ENCODE measurements at regions of chr1 and their contacts with region 1.

Region 1: GRCh38 chr1:168082008-168082876 is 54.5 kb downstream of the GPR161 start:
- DNase-seq: peak; percentile 38
- H3K4me3 ChIP-seq: no peak overlapping the region
- CTCF ChIP-seq: peak; percentile 96

Region 2: DNA sequence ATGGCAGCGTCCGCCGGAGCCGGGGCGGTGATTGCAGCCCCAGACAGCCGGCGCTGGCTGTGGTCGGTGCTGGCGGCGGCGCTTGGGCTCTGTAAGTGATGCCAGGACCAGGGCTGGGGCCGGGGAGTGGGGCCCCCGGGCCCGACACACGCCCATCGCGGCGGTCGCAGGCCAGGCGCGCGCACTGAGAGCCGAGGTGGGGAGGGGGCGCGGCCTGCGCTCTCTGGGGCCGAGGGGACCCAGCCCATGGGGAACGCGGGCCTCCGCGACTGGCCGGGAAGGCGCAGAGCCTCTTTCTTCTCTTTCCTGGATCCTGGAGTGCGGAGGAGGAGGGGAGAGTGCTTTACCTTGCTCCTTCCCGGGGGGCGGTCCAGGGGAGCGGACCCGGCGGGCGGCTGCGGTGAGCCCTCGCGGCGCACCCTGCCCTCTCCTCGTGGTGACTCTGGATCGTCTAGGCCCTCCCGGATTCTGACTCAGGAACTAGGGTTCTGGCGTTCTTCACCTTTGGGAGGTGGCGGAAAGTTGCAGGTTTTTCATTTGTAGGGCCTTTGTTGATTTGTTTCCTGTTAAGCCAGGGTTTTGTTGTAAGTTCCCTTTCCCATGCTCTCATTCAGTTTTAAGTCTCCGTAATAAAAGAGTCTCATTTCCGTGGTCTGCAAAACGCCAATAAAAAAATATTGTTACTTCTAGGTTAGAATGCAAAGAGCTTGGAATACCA is 359.9 kb before region 1 on chr1:
- CTCF ChIA-PET with region 1: interaction called, 26 read pairs
- POLR2A ChIA-PET with region 1: no interaction called
- DNase-seq: no peak
- H3K4me3 ChIP-seq: peak overlapping the region; percentile 77
- CTCF ChIP-seq: no peak

Region 3: GRCh38 chr1:167922023-167922422 is 160.2 kb before region 1 on chr1:
- CTCF ChIA-PET with region 1: no interaction called
- POLR2A ChIA-PET with region 1: no interaction called
- DNase-seq: no peak
- H3K4me3 ChIP-seq: no peak overlapping the region
- CTCF ChIP-seq: no peak

Region 4: DNA sequence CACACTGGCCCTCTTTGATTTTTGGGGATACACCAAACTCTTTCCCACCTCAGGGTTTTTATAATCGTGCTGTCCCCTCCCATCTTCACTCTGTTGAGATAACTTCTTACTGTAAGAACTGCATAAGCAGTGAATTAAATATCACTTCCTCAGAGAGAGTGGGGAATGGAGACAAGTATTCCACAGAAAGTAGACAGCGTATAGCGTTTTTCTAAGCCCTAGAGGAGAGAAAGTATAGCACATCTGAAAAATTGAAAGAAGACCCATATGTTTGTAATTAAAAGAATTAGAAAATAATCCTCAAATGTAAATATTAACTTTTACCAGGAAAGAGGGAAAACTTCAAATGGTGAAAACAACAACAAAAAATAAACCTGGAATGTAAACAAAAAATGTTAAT is 12.9 kb before region 1 on chr1:
- CTCF ChIA-PET with region 1: interaction called, 28 read pairs
- POLR2A ChIA-PET with region 1: no interaction called
- DNase-seq: no peak
- H3K4me3 ChIP-seq: no peak overlapping the region
- CTCF ChIP-seq: no peak

Region 5: DNA sequence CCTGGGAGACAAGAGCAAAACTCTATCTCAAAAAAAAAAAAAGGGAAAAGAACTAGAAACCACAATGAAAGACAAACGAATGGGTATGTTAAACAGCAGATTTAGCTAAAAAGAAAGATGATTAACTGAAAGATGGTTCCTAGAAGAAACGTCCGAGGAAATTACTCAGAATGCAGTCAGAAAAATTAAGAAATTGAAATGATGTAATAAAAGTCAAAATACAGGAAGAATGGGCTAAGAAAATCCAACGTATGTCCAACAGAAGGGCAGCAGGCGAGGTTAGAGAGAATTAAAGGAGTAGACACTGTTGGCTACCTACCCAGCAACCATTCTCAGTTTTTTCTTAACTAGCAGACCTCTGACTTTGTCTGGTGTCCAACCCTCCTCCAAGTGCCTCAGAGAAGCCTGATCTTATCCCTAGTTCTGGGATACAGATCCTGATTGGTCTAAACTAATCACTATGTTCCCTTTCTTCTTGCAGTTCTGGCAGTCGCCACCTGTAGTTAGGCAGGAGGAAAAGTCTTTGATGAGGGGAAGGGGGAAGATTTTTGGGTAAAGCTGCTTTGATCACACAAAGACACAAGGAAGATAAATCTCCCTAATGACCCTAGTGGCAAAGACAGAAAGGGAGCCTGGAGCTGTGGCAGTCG is 28.8 kb after region 1 on chr1:
- CTCF ChIA-PET with region 1: interaction called, 237 read pairs
- POLR2A ChIA-PET with region 1: no interaction called
- DNase-seq: no peak
- H3K4me3 ChIP-seq: no peak overlapping the region
- CTCF ChIP-seq: no peak

Region 6: GRCh38 chr1:168136709-168137514 is 54.7 kb after region 1 on chr1 and contains the start of gene GPR161:
- CTCF ChIA-PET with region 1: interaction called, 10 read pairs
- POLR2A ChIA-PET with region 1: interaction called, 5 read pairs
- DNase-seq: no peak
- H3K4me3 ChIP-seq: peak within 1 kb of the TSS; percentile 79
- CTCF ChIP-seq: no peak

Region 7: GRCh38 chr1:168342572-168343280 is 260.5 kb after region 1 on chr1:
- CTCF ChIA-PET with region 1: interaction called, 10 read pairs
- POLR2A ChIA-PET with region 1: no interaction called
- DNase-seq: peak; percentile 59
- H3K4me3 ChIP-seq: peak overlapping the region; percentile 29
- CTCF ChIP-seq: peak; percentile 87